ENCODE measurements at regions of chr1 and their contacts with region 1.

Region 1: GRCh38 chr1:196738730-196739129 is 35.9 kb upstream of the CFHR3 start:
- DNase-seq: no peak
- H3K4me3 Mint-ChIP-seq: no peak overlapping the region
- H3K27ac Mint-ChIP-seq: no peak overlapping the region
- H3K4me1 Mint-ChIP-seq: peaks cover 6% of the 10 kb centered on the region
- H3K27me3 Mint-ChIP-seq: no peaks in the 10 kb centered on the region
- CTCF ChIP-seq: no peak

Region 2: GRCh38 chr1:196317535-196318522 is 420.9 kb before region 1 on chr1:
- CTCF ChIA-PET with region 1: no interaction called
- POLR2A ChIA-PET with region 1: no interaction called
- intact Hi-C with region 1: no loop called
- DNase-seq: peak; percentile 70
- H3K4me3 Mint-ChIP-seq: no peak overlapping the region
- H3K27ac Mint-ChIP-seq: no peak overlapping the region
- H3K4me1 Mint-ChIP-seq: peaks cover 6% of the 10 kb centered on the region
- H3K27me3 Mint-ChIP-seq: no peaks in the 10 kb centered on the region
- CTCF ChIP-seq: peak; percentile 88

Region 3: DNA sequence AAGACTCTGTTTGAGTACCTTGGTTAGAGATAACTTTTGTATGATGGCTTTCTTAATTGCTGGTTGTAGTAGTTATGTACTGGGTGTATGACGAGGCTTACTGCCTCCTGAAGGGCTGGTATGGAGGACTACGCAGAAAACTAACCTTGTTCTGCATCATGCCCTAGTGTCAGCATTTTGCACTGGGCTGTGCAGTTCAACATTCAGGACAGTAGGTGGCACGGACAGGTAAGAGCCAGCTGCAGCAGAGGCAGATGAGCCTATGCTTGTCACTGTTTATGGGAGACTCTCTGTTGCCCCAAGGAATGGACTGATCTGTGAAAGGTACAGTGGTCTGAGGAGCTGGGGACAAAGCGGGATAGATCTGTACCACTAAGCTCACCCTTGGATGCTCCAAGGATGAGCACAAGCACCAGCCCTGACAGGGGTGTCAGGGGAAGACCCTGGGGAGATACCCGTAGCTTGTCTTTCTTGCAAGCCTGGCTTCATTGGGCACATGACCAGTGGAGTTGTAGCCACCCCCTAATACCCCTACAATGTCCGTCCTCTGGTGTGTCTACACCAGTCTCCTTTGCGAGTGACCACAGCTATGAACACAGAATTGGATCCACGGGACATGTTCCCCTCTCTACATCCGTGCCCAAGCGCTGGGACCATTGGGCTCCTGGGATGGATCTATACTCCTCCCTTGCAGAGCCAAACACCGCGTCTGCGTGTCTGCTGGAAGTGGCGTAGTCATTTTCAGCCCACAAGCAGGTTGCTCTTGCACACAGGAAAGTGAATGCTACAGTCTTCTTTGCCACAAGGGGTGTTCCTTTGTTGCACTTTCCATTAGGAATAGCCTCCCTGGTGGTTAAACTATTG is 15.2 kb before region 1 on chr1:
- CTCF ChIA-PET with region 1: interaction called, 26 read pairs
- POLR2A ChIA-PET with region 1: no interaction called
- intact Hi-C with region 1: no loop called
- DNase-seq: peak; percentile 77
- H3K4me3 Mint-ChIP-seq: no peak overlapping the region
- H3K27ac Mint-ChIP-seq: no peak overlapping the region
- H3K4me1 Mint-ChIP-seq: no peaks in the 10 kb centered on the region
- H3K27me3 Mint-ChIP-seq: no peaks in the 10 kb centered on the region
- CTCF ChIP-seq: peak; percentile 88